Esophagus muscularis mucosa (tissue), 4 donors: ENCODE measurements at regions of chr2 and their contacts with region 1.

Region 1: GRCh38 chr2:32946314-32947075 is at the start of gene LTBP1:
- DNase-seq: peak; percentile 92
- H3K4me3 ChIP-seq: peak within 1 kb of the TSS; percentile 76 to 93 (median 81)
- H3K27ac ChIP-seq: peak within 1 kb of the TSS; percentile 93 to 98 (median 95)
- H3K4me1 ChIP-seq: peaks cover 15 to 32% (median 25%) of the 10 kb centered on the region in 4 donors
- H3K27me3 ChIP-seq: no peaks in the 10 kb centered on the region
- CTCF ChIP-seq: peak; percentile 62 to 77 (median 72)
- EP300 ChIP-seq: no peak
- POLR2A ChIP-seq: no peak
- total RNA-seq, gene LTBP1: 254 to 465 (median 368) TPM

Region 2: GRCh38 chr2:32772638-32773447 is 173.7 kb before region 1 on chr2:
- intact Hi-C with region 1: loop called (anchors 5 kb)
- DNase-seq: no peak
- H3K4me3 ChIP-seq: no peak overlapping the region
- H3K27ac ChIP-seq: peak overlapping the region in 3 of 4 donors; percentile 12 to 35 (median 13)
- H3K4me1 ChIP-seq: peaks cover 10 to 14% (median 11%) of the 10 kb centered on the region in 4 donors
- H3K27me3 ChIP-seq: no peaks in the 10 kb centered on the region
- CTCF ChIP-seq: peak; percentile 71 to 81 (median 74)
- EP300 ChIP-seq: no peak
- POLR2A ChIP-seq: no peak

Region 3: GRCh38 chr2:33015421-33016142 is 69.1 kb after region 1 on chr2:
- intact Hi-C with region 1: loop called (anchors 5 kb)
- DNase-seq: peak; percentile 86
- H3K4me3 ChIP-seq: no peak overlapping the region
- H3K27ac ChIP-seq: no peak overlapping the region
- H3K4me1 ChIP-seq: peaks cover 0 to 29% (median 24%) of the 10 kb centered on the region in 4 donors
- H3K27me3 ChIP-seq: no peaks in the 10 kb centered on the region
- CTCF ChIP-seq: no peak
- EP300 ChIP-seq: no peak
- POLR2A ChIP-seq: no peak

Region 4: GRCh38 chr2:33190393-33190937 is 244.0 kb after region 1 on chr2:
- intact Hi-C with region 1: no loop called
- DNase-seq: no peak
- H3K4me3 ChIP-seq: no peak overlapping the region
- H3K27ac ChIP-seq: no peak overlapping the region
- H3K4me1 ChIP-seq: peaks cover 0 to 30% (median 15%) of the 10 kb centered on the region in 4 donors
- H3K27me3 ChIP-seq: no peaks in the 10 kb centered on the region
- CTCF ChIP-seq: no peak
- EP300 ChIP-seq: no peak
- POLR2A ChIP-seq: no peak

Region 5: DNA sequence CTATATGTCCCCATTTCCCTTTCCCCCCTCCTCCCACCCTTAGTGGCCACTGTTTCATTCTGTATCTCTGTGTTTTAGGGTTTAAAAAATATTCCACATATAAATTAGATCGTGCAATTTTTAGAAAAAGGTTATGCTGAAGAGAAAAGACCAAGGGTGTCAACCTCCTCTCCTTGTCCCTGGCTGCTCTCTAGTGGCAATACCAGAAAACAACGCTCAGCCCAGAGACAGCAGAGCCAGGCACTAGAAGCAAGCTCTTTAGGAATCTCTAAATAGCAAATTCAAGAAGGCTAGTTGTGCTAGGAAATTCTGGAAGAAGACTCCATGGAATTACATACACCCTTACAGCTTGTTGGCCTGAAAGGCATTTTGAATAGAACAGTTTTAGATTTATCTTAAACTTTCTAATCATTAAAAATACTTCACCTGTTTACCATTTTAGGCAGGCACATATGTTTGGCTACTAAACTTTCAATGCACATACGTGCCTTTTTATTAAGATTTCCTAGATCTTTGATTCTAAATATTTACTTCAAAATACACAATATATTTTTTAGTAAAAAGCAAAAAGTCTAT is 494.8 kb after region 1 on chr2:
- intact Hi-C with region 1: loop called (anchors 10 kb)
- DNase-seq: no peak
- H3K4me3 ChIP-seq: no peak overlapping the region
- H3K27ac ChIP-seq: peak overlapping the region in 1 of 4 donors; percentile 21
- H3K4me1 ChIP-seq: peaks cover 22 to 48% (median 32%) of the 10 kb centered on the region in 4 donors
- H3K27me3 ChIP-seq: no peaks in the 10 kb centered on the region
- CTCF ChIP-seq: peak; percentile 70 to 83 (median 83)
- EP300 ChIP-seq: no peak
- POLR2A ChIP-seq: no peak